ENCODE measurements at regions of chr7 and their contacts with region 1.

Region 1: GRCh38 chr7:32164346-32164957 is 94.2 kb upstream of the PDE1C start:
- DNase-seq: no peak
- ATAC-seq: peak; percentile 63 to 70

Region 2: GRCh38 chr7:31782411-31782991 is 382.0 kb before region 1 on chr7:
- intact Hi-C with region 1: loop called in 1 of 2 experiments (anchors 5 kb)
- DNase-seq: no peak
- ATAC-seq: peak; percentile 63 to 76

Region 3: DNA sequence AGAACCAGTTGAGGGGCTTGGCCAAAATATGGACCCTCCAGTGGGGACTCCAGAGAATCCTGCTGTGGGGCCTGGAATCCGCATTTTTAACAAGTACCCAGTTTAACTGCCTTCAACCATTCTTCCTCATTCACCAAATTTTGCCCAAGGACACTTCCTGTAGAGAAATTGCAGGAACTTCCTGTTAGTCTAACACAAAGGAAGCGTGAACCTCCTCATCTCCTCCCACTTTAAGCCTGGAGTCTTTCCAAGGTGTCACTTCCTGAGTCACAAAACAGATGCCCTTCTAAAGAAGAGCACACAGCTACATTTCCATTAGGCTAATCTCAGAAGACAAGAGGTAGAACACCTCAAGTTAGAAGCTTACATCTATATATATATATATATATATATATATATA is 289.0 kb before region 1 on chr7:
- intact Hi-C with region 1: loop called in 1 of 2 experiments (anchors 10 kb)
- DNase-seq: no peak
- ATAC-seq: peak; percentile 53 to 67

Region 4: GRCh38 chr7:32088451-32088881 is 76.0 kb before region 1 on chr7:
- intact Hi-C with region 1: no loop called
- DNase-seq: no peak
- ATAC-seq: peak in 1 of 2 donors; percentile 46

Region 5: DNA sequence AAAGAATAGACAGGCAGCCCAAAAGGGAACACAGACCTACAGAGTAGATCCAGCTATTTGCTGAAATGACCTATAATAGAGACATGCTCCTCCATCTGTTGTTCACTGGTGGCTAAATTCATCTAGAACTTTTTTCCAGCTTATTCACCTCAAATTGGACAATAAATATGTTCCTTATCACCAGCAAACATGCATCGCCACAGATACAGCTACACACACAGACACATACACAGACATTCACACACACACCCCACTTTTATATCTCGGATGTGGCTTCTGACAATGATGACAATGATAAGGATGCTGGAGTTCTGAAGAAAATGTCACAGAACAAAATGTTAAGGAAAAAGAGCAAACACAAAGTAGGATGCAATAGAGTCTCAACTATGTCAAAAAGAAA is 150.3 kb after region 1 on chr7:
- intact Hi-C with region 1: no loop called
- DNase-seq: no peak
- ATAC-seq: no peak

Measured in left cardiac atrium (tissue), 4 donors.